Heart left ventricle (tissue), 16 donors: ENCODE measurements at regions of chr5 and their contacts with region 1.

Region 1: GRCh38 chr5:96336351-96336985 is 96.6 kb downstream of the PCSK1 start:
- DNase-seq: peak in 4 of 5 donors; percentile 40 to 61 (median 56)
- ATAC-seq: peak; percentile 36 to 84 (median 75)
- H3K4me3 ChIP-seq: no peak overlapping the region
- H3K27ac ChIP-seq: peak overlapping the region in 8 of 12 donors; percentile 35 to 77 (median 48)
- H3K4me1 ChIP-seq: peaks cover 0 to 50% (median 10%) of the 10 kb centered on the region in 12 donors
- H3K27me3 ChIP-seq: no peaks in the 10 kb centered on the region
- CTCF ChIP-seq: peak; percentile 73 to 95 (median 85)
- POLR2A ChIP-seq: no peak

Region 2: GRCh38 chr5:95773335-95774059 is 563.0 kb before region 1 on chr5:
- intact Hi-C with region 1: loop called in 1 of 10 experiments (anchors 10 kb)
- DNase-seq: no peak
- ATAC-seq: peak in 3 of 4 donors; percentile 14 to 49 (median 19)
- H3K4me3 ChIP-seq: no peak overlapping the region
- H3K27ac ChIP-seq: peak overlapping the region in 3 of 12 donors; percentile 11 to 37 (median 24)
- H3K4me1 ChIP-seq: peaks cover 0 to 30% (median 13%) of the 10 kb centered on the region in 12 donors
- H3K27me3 ChIP-seq: no peaks in the 10 kb centered on the region
- CTCF ChIP-seq: no peak
- POLR2A ChIP-seq: no peak

Region 3: DNA sequence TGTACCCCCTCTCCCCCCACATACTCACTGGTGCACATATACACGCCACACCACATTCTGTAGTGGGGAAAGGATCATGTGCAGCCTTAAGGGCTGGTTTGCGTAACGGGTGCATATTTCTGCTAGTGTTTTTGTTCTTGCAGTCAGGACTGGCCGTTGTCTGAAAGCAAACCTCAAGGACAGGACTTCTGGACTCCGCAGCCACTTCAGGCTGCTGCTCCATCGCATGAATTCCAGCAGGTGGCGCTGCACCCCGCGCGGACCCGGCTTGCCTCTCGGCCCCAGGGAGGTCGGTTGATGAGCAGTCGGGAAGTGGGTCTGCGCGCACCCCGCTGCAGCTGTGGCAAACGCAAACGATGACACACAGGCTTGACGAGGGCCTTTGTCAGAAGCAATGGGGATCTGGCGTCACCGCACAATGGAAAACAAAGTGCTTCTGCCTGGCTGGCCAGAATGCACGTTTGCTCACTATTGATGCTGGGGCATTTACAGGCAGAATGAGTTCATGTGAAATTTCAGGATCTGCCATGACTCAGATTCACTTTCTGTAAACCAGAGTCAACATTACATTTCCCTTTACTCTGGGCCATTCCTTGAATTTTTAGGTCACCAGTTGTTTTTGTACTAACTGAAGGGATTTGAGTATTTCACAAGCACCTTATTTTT is 477.7 kb before region 1 on chr5:
- intact Hi-C with region 1: loop called (anchors 1 to 2 kb)
- DNase-seq: peak; percentile 85 to 96 (median 91)
- ATAC-seq: peak; percentile 62 to 80 (median 73)
- H3K4me3 ChIP-seq: peak overlapping the region in 9 of 12 donors; percentile 18 to 46 (median 30)
- H3K27ac ChIP-seq: peak overlapping the region; percentile 82 to 97 (median 90)
- H3K4me1 ChIP-seq: peaks cover 0 to 72% (median 44%) of the 10 kb centered on the region in 12 donors
- H3K27me3 ChIP-seq: no peaks in the 10 kb centered on the region
- CTCF ChIP-seq: peak; percentile 97 to 99 (median 98)
- POLR2A ChIP-seq: peak in 1 of 2 donors; percentile 37

Region 4: GRCh38 chr5:95961617-95962474 is 374.6 kb before region 1 on chr5 and contains the start of gene ELL2:
- intact Hi-C with region 1: loop called (anchors 1 to 10 kb)
- DNase-seq: peak; percentile 97 to 99 (median 98)
- ATAC-seq: peak; percentile 89 to 95 (median 94)
- H3K4me3 ChIP-seq: peak within 1 kb of the TSS; percentile 70 to 97 (median 90)
- H3K27ac ChIP-seq: peak within 1 kb of the TSS; percentile 94 to 100 (median 98)
- H3K4me1 ChIP-seq: peaks cover 0 to 49% (median 23%) of the 10 kb centered on the region in 12 donors
- H3K27me3 ChIP-seq: no peaks in the 10 kb centered on the region
- CTCF ChIP-seq: no peak
- POLR2A ChIP-seq: peak; percentile 48 to 97
- total RNA-seq, gene ELL2: 15.4 to 74.5 (median 31.1) TPM

Region 5: GRCh38 chr5:96113170-96113939 is 223.1 kb before region 1 on chr5:
- intact Hi-C with region 1: loop called in 1 of 10 experiments (anchors 10 kb)
- DNase-seq: peak in 2 of 5 donors; percentile 40 to 50
- ATAC-seq: peak; percentile 55 to 93 (median 79)
- H3K4me3 ChIP-seq: no peak overlapping the region
- H3K27ac ChIP-seq: no peak overlapping the region
- H3K4me1 ChIP-seq: peaks cover 0 to 6% (median 0%) of the 10 kb centered on the region in 12 donors
- H3K27me3 ChIP-seq: no peaks in the 10 kb centered on the region
- CTCF ChIP-seq: no peak
- POLR2A ChIP-seq: no peak

Region 6: DNA sequence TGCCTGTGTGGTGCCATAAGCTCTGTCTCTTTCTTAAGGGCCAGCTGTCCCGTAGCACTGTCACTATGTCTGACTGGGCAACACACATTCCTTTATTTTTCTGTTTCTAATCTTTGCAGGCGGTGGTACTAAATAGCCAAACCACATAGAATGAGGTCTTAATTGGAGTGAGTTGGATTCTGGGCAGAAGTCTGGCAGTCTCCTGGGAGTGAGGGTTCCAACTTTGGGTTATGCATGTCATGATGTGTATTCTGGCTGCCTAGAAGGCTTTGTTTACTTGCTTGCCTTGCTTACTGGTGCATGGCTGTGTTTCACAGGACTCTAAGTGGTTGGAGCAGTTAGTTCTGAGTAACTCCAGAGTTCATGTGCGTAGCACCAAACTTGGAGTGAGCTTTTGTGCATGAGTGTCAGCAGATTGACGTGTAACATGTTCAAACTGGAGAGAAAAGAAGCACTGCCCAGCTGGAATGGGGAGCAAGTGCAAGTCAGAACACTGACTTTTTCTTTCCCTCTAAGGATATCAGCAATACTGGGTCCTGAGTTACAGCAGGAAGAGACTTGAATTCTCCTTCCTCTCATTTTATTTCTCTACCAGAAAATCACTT is 89.3 kb before region 1 on chr5:
- intact Hi-C with region 1: loop called in 3 of 10 experiments (anchors 5 to 10 kb)
- DNase-seq: peak in 4 of 5 donors; percentile 10 to 52 (median 44)
- ATAC-seq: peak; percentile 88 to 96 (median 95)
- H3K4me3 ChIP-seq: peak overlapping the region in 1 of 12 donors; percentile 1
- H3K27ac ChIP-seq: peak overlapping the region; percentile 51 to 81 (median 74)
- H3K4me1 ChIP-seq: peaks cover 0 to 44% (median 15%) of the 10 kb centered on the region in 12 donors
- H3K27me3 ChIP-seq: no peaks in the 10 kb centered on the region
- CTCF ChIP-seq: no peak
- POLR2A ChIP-seq: no peak